ENCODE measurements at regions of chr2 and their contacts with region 1.

Region 1: GRCh38 chr2:30711646-30712085 is 95.6 kb downstream of the CAPN13 start:
- DNase-seq: peak; percentile 78
- H3K4me3 ChIP-seq: no peak overlapping the region
- H3K27ac ChIP-seq: no peak overlapping the region
- H3K27me3 ChIP-seq: peaks cover 5% of the 10 kb centered on the region
- CTCF ChIP-seq: peak; percentile 100

Region 2: GRCh38 chr2:30146438-30147147 is 565.1 kb before region 1 on chr2 and contains the start of gene YPEL5:
- CTCF ChIA-PET with region 1: interaction called, 65 read pairs
- POLR2A ChIA-PET with region 1: interaction called, 3 read pairs
- DNase-seq: peak; percentile 99
- H3K4me3 ChIP-seq: peak within 1 kb of the TSS; percentile 74
- H3K27ac ChIP-seq: peak within 1 kb of the TSS; percentile 80
- H3K27me3 ChIP-seq: peaks cover 7% of the 10 kb centered on the region
- CTCF ChIP-seq: no peak
- polyA plus RNA-seq, gene YPEL5: 112 and 116 TPM in 2 replicates

Region 3: DNA sequence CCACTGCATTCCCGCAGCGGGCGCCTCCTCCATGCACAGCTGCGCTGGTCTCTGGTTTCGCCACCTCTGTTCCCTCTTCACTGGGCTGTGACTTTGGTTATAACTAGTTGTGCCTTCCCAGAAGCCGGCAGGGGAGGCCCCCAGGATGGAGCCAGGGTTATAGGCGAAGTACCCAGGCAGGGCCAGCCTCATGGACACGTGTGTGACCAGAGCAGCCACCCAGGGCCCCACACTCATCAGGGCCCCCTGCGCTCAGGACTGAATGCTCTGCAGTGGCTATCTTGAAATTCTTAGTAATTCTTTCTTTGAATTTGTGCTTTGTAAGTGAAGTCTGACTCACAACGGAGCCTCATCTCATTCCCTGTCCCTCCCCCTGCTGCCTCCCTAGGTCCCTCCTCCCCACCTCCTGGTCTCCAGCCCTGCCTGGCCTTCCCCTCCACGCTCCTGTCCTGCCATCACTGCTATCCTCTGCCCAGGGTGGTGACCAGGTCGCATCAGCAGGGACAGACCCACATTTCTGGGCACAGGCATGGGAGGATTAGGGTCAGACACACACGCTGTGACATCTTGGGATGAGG is 518.5 kb before region 1 on chr2:
- CTCF ChIA-PET with region 1: interaction called, 12 read pairs
- POLR2A ChIA-PET with region 1: no interaction called
- DNase-seq: no peak
- H3K4me3 ChIP-seq: no peak overlapping the region
- H3K27ac ChIP-seq: no peak overlapping the region
- H3K27me3 ChIP-seq: peaks cover 8% of the 10 kb centered on the region
- CTCF ChIP-seq: no peak

Region 4: DNA sequence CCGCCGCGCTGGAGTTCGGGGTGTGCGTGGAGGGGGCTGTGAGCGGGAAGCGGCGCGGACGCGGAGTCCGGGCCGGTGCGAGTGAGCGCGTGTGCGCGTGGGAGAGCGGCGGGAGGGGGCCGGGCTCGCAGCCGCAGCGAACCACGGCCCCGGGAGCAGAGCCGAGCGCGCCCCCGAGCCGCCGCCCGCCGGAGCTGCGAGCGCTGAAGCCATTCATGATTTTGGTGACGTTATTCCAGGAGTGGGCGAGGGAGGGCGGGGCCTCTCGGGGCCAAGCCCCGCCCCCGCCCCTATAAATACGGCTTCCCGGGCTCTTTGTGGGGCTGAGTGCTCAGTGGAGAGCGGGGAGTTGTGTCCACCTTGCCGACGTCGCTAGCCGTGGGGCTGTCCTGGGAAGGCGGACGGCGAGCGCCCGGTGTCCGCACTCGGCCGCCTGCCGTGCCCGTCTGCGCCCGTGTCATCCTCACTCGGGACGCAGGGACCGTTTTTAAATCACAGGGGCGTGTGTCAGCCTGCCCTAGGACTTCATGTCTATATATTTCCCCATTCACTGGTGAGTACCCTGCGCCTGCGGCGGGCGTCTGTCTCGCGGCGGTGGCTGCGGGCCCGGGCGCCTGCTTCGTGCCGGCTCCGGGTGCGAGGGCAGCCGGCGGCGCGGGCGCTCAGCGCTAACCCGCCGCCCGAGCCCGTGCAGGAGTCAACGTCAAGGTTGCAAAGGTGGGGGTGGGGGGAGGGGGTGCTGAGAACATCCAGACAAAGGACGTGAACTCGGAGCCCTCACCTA is 480.3 kb before region 1 on chr2 and contains the start of gene LBH:
- CTCF ChIA-PET with region 1: interaction called, 37 read pairs
- POLR2A ChIA-PET with region 1: interaction called, 28 read pairs
- DNase-seq: peak; percentile 85
- H3K4me3 ChIP-seq: peak within 1 kb of the TSS; percentile 89
- H3K27ac ChIP-seq: peak within 1 kb of the TSS; percentile 65
- H3K27me3 ChIP-seq: no peaks in the 10 kb centered on the region
- CTCF ChIP-seq: no peak
- polyA plus RNA-seq, gene LBH: 381 and 463 TPM in 2 replicates

Region 5: DNA sequence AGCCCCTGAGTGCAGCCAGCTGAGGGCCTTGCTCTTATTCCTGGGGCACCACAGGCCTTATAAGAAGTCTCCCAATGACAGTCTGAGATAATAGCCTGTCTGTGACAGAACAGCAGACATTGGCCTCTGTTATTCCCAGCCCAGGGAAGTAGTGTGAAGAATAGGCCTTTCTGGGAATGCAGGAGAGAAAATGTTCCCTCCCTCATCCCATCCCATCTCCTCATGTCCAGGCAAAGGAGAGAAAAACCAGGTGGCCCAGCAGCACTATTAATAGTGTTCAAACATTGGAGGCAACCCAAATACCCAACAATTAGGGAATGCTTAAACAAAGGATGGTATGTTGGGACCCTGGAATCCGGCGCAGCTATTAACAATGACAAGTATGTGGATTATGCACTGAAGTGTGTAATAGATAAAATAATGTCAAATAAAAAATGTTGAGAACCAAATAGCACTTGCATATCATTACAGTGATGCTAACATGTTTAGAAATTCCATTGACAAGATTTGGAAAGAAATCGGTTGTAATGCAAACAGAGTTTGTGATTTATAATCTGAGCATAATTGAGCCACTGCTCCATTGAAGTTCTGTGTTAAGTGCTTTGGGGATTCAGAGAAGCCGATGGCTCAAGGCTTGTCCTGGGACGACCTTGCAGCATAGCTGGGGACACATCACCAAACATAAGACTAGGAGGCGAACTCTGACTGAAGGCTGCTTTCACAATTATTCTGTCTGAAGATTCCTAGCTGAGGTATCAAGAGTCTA is 411.0 kb before region 1 on chr2:
- CTCF ChIA-PET with region 1: interaction called, 24 read pairs
- POLR2A ChIA-PET with region 1: no interaction called
- DNase-seq: peak; percentile 96
- H3K4me3 ChIP-seq: no peak overlapping the region
- H3K27ac ChIP-seq: peak overlapping the region; percentile 99
- H3K27me3 ChIP-seq: no peaks in the 10 kb centered on the region
- CTCF ChIP-seq: no peak

Region 6: DNA sequence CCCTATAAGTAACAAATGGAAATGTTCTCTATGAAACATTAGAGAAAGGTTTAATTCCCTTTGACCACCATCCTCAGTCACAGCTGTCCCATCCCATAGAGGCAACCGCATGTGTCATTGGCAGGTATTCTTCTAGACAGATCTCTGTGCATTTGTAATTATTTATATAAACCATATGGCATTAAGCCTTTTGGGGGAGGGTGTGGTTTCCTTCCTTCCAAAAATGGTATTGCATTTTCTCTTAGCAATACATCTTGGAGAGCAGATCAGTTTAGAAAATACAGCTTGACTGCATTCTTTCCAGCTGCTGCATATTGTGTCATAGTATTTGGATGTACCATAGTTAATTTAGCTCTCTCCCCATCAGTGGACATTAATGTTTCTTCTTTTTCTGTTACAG is 206.9 kb before region 1 on chr2:
- CTCF ChIA-PET with region 1: interaction called, 21 read pairs
- POLR2A ChIA-PET with region 1: no interaction called
- DNase-seq: no peak
- H3K4me3 ChIP-seq: no peak overlapping the region
- H3K27ac ChIP-seq: no peak overlapping the region
- H3K27me3 ChIP-seq: no peaks in the 10 kb centered on the region
- CTCF ChIP-seq: no peak

Region 7: GRCh38 chr2:31170071-31170698 is 458.5 kb after region 1 on chr2:
- CTCF ChIA-PET with region 1: interaction called, 73 read pairs
- POLR2A ChIA-PET with region 1: no interaction called
- DNase-seq: peak; percentile 15
- H3K4me3 ChIP-seq: no peak overlapping the region
- H3K27ac ChIP-seq: no peak overlapping the region
- H3K27me3 ChIP-seq: no peaks in the 10 kb centered on the region
- CTCF ChIP-seq: peak; percentile 93